ENCODE measurements at regions of chr18 and their contacts with region 1.

Region 1: GRCh38 chr18:44895176-44895798 is 214.6 kb downstream of the SETBP1 start:
- DNase-seq: peak; percentile 66
- ATAC-seq: peak; percentile 84
- H3K4me3 ChIP-seq: no peak overlapping the region
- H3K27ac ChIP-seq: no peak overlapping the region
- H3K4me1 ChIP-seq: 0 out of 2 replicates have a peak, but pooled peaks cover under 1% of the 10 kb centered on the region
- H3K27me3 ChIP-seq: no peaks in the 10 kb centered on the region
- CTCF ChIP-seq: peak; percentile 57

Region 2: GRCh38 chr18:43620936-43621335 is 1274.4 kb before region 1 on chr18:
- CTCF ChIA-PET with region 1: no interaction called
- POLR2A ChIA-PET with region 1: no interaction called
- intact Hi-C with region 1: loop called (anchors 10 kb)
- DNase-seq: peak; percentile 50
- ATAC-seq: no peak
- H3K4me3 ChIP-seq: no peak overlapping the region
- H3K27ac ChIP-seq: no peak overlapping the region
- H3K4me1 ChIP-seq: no peaks in the 10 kb centered on the region
- H3K27me3 ChIP-seq: no peaks in the 10 kb centered on the region
- CTCF ChIP-seq: peak; percentile 43; the same call in 1 of the 2 replicates

Region 3: GRCh38 chr18:44098551-44099098 is 796.7 kb before region 1 on chr18:
- CTCF ChIA-PET with region 1: no interaction called
- POLR2A ChIA-PET with region 1: no interaction called
- intact Hi-C with region 1: loop called (anchors 10 kb)
- DNase-seq: peak; percentile 53
- ATAC-seq: peak; percentile 94
- H3K4me3 ChIP-seq: peak overlapping the region; percentile 53; the same call in 1 of the 2 replicates
- H3K27ac ChIP-seq: no peak overlapping the region
- H3K4me1 ChIP-seq: no peaks in the 10 kb centered on the region
- H3K27me3 ChIP-seq: no peaks in the 10 kb centered on the region
- CTCF ChIP-seq: peak; percentile 69

Region 4: DNA sequence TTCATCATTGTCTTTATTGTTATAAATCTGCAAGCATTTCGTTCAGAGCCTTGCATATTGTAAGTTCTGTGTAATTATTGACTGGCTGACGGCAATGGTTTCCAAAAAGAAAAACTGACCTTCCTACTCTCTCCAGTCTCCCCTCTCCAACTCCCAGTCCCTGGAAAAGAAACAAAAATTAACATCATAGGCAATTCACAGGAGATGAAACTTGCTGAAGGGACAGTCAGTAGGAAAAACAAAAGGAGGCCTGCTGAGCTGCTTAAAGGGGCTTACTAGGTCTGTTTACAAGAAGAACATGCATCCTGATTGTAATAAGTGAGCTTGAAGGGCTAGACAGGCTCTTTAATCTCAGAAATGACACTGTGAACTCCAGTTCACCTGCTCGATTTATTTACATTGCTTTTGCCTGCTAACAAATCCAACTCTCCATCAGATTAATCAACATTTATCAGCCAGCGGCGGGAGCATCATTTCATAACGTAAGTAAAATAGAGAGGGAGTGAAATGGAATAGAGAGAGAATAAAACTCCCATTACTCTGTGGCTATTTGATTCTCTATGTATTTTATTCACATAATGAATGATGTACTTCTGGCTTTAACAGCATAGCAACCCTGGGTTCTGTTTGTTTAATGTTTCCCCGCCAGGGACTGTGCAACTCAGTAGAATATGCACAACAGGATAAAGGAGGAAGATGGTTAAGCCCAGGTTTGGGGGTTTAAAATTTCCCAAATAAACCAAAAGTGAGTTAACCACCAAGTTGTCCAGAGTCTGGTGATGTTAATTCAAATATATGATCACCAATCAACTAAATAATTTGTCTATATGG is 471.3 kb before region 1 on chr18:
- CTCF ChIA-PET with region 1: no interaction called
- POLR2A ChIA-PET with region 1: no interaction called
- intact Hi-C with region 1: no loop called
- DNase-seq: no peak
- ATAC-seq: no peak
- H3K4me3 ChIP-seq: no peak overlapping the region
- H3K27ac ChIP-seq: no peak overlapping the region
- H3K4me1 ChIP-seq: no peaks in the 10 kb centered on the region
- H3K27me3 ChIP-seq: no peaks in the 10 kb centered on the region
- CTCF ChIP-seq: no peak

Region 5: DNA sequence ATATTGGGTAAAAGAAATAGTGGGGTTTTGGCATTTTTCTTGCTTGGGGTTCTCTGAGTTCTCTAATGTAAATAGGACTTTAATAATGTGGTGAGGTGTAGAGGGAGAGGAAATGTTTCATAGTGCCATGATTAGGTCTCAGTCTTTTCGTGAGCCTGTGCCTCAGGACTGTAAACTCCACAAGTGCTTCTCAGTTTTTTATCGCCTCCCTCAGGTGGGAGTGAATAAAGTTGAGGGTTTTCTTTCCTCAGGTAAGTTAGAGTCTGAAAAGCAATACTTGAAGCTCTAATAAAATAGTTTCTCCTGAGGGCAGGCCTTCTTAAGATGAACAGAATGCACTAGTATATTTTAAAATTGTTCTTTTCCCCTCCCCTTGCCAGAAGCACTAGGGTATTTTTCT is 457.7 kb before region 1 on chr18:
- CTCF ChIA-PET with region 1: no interaction called
- POLR2A ChIA-PET with region 1: no interaction called
- intact Hi-C with region 1: loop called (anchors 5 kb)
- DNase-seq: no peak
- ATAC-seq: no peak
- H3K4me3 ChIP-seq: no peak overlapping the region
- H3K27ac ChIP-seq: no peak overlapping the region
- H3K4me1 ChIP-seq: no peaks in the 10 kb centered on the region
- H3K27me3 ChIP-seq: no peaks in the 10 kb centered on the region
- CTCF ChIP-seq: no peak

Region 6: DNA sequence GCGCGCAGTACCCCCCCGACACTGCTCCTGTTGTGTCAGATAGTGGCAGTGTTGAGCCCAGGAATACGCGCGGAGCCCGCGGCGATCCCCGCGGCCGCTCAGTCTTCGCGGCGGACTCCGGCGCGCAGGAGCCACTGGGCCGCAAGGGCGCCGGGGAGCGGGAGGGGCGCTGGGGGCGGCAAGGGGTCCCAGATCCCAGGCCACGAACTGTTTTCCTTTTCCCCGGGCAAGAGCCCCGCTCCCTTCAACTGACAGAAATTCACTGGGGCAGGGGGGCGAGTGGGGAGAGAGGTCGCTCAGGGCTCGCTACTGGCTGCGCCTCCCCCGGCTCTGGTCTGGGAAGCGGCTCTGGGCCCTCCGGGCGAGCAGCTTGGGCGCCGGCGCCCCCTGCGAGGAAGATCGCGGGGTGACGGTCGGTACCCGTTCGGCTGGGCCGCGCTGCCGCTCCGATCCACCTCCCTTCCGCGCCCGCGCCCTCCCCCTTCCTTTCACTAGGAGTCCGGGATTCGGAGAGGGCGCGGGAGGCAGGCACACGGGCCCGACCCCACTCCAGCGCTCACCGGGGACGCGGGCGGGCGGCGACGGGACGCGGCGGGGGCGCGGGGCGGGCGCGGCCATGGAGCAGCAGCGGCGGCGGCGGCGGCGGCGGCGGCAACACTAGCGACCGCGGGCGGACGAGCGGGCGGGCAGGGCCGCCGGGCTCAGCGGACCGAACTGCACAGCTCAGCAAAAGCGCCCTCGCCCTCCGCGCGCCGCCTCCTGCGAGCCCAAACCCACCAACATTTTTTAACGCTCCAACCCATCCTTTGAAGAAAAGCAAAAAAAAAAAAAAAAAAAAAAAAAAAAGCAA is 216.0 kb before region 1 on chr18:
- CTCF ChIA-PET with region 1: interaction called, 3 read pairs
- POLR2A ChIA-PET with region 1: no interaction called
- intact Hi-C with region 1: loop called (anchors 1 kb)
- DNase-seq: peak; percentile 67
- ATAC-seq: peak; percentile 80
- H3K4me3 ChIP-seq: peak overlapping the region; percentile 73
- H3K27ac ChIP-seq: peak overlapping the region; percentile 43
- H3K4me1 ChIP-seq: peaks cover 11% of the 10 kb centered on the region; the same call in 1 of the 2 replicates
- H3K27me3 ChIP-seq: no peaks in the 10 kb centered on the region
- CTCF ChIP-seq: peak; percentile 43; the same call in 1 of the 2 replicates

Region 7: GRCh38 chr18:45212181-45213039 is 317.1 kb after region 1 on chr18:
- CTCF ChIA-PET with region 1: no interaction called
- POLR2A ChIA-PET with region 1: no interaction called
- intact Hi-C with region 1: loop called (anchors 5 kb)
- DNase-seq: peak; percentile 69
- ATAC-seq: peak; percentile 84
- H3K4me3 ChIP-seq: no peak overlapping the region
- H3K27ac ChIP-seq: no peak overlapping the region
- H3K4me1 ChIP-seq: peaks cover 3% of the 10 kb centered on the region; the same call in 1 of the 2 replicates
- H3K27me3 ChIP-seq: no peaks in the 10 kb centered on the region
- CTCF ChIP-seq: peak; percentile 89